Activated T-helper 1 cell treated with anti-CD3 and anti-CD28 coated beads, Interleukin-12 subunit alpha, Interleukin-12 subunit beta, Interleukin-2, Interleukin-4 antibody, amounts not matched to agents 30 ng/mL and 10 ng/mL and 1 ng/mL, durations not matched to agents 14 hours and 24 hours and 36 hours (primary cell): ENCODE measurements at regions of chr13 and their contacts with region 1.

Region 1: DNA sequence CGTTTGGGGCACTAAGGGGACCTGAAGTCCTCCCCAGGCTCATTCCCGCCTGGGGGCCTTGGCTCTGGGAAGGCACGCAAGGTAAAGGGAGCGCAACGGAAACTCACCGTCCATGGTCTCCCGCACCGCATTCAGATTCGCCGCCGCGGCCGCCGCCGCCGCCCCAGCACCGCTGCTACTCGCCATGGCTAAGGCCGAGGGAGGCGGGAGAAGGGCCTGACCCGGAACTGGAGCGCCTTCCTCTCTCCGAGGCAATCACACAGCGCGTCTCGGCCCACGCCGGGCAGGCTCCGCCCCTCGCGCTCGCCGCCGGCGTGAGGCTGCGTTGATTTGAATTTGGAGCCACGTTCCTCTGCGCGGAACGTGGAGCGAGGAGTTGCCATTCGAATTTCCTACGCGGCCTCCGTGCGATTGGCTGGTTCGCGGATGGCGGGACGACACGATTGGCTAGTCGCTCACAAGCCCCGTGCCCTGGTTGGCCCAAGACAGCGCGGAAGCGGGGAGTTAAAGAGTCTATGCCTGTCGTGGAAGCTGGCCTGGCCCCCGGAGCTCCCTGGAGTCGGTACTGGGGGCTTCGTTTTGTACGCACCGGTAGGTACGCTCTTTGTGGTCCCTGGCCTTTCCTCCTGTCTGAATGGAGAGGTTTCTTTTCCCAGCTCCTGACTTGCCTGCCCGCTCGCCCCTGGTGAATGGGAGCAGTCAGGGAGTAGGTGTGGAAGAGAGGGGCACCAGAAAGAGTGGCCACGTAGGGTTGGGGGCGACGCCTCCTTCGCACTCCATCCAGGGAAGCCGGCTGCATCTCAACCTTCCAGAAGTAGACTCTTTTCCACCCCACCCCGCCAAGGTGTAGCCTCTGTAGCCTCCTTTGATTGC is at the starts of genes BORA and MZT1:
- DNase-seq: peak; percentile 97
- H3K4me3 Mint-ChIP-seq: peak within 1 kb of the TSS; percentile 99
- H3K27ac Mint-ChIP-seq: peak within 1 kb of the TSS; percentile 97
- H3K4me1 Mint-ChIP-seq: peaks cover 70% of the 10 kb centered on the region
- H3K27me3 Mint-ChIP-seq: no peaks in the 10 kb centered on the region
- total RNA-seq, gene BORA: 14.6 and 19.4 TPM in 2 replicates
- total RNA-seq, gene MZT1: 21.2 and 22.8 TPM in 2 replicates

Region 2: GRCh38 chr13:72617951-72618350 is 109.7 kb before region 1 on chr13:
- intact Hi-C with region 1: no loop called
- DNase-seq: no peak
- H3K4me3 Mint-ChIP-seq: no peak overlapping the region
- H3K27ac Mint-ChIP-seq: no peak overlapping the region
- H3K4me1 Mint-ChIP-seq: no peaks in the 10 kb centered on the region
- H3K27me3 Mint-ChIP-seq: no peaks in the 10 kb centered on the region

Region 3: DNA sequence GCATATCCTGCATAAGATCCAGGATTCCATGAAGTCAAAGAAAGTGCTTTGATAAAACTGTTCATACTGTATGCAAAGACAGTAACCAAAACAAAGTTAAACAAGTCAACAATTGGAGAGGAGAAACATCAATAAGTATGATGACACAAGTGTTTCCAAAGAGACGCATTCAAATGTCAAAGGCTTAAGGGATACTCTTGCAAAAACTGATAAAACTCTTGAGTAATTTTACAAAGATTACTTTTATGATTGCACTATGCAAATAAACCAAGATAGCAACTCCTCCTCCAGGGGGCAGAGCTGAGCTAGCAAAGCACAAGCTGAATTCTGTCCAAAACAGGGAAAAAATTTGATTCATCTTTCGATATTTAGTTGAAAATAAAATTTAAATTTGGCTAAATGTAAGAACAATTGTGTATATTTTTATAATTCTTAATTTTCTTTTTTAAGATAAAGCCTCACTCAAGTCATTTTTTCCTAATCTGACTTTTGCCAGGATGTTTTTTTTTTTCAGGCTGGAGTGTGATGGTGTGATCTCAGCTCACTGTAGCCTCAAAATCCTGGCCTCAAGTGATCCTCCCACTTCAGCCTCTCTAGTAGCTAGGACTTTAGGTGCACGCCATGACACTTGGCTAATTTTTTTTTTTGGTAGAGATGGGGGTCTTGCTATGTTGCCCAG is 84.2 kb before region 1 on chr13:
- intact Hi-C with region 1: loop called (anchors 1 kb)
- DNase-seq: peak; percentile 8
- H3K4me3 Mint-ChIP-seq: no peak overlapping the region
- H3K27ac Mint-ChIP-seq: no peak overlapping the region
- H3K4me1 Mint-ChIP-seq: no peaks in the 10 kb centered on the region
- H3K27me3 Mint-ChIP-seq: no peaks in the 10 kb centered on the region

Region 4: GRCh38 chr13:72781451-72782439 is 54.1 kb after region 1 on chr13 and contains the starts of genes DIS3 and PIBF1:
- intact Hi-C with region 1: loop called (anchors 1 kb)
- DNase-seq: peak; percentile 97
- H3K4me3 Mint-ChIP-seq: peak within 1 kb of the TSS; percentile 100
- H3K27ac Mint-ChIP-seq: peak within 1 kb of the TSS; percentile 100
- H3K4me1 Mint-ChIP-seq: peaks cover 65% of the 10 kb centered on the region
- H3K27me3 Mint-ChIP-seq: no peaks in the 10 kb centered on the region
- total RNA-seq, gene DIS3: 49.9 and 55.4 TPM in 2 replicates
- total RNA-seq, gene PIBF1: 20.9 and 21.2 TPM in 2 replicates

Region 5: GRCh38 chr13:73058736-73059459 is 331.2 kb after region 1 on chr13 and contains the start of gene KLF5:
- intact Hi-C with region 1: loop called (anchors 1 kb)
- DNase-seq: peak; percentile 97
- H3K4me3 Mint-ChIP-seq: peak within 1 kb of the TSS; percentile 82
- H3K27ac Mint-ChIP-seq: peak within 1 kb of the TSS; percentile 74
- H3K4me1 Mint-ChIP-seq: peaks cover 20% of the 10 kb centered on the region
- H3K27me3 Mint-ChIP-seq: peaks cover 51% of the 10 kb centered on the region
- total RNA-seq, gene KLF5: 2.4 and 2.5 TPM in 2 replicates

Region 6: DNA sequence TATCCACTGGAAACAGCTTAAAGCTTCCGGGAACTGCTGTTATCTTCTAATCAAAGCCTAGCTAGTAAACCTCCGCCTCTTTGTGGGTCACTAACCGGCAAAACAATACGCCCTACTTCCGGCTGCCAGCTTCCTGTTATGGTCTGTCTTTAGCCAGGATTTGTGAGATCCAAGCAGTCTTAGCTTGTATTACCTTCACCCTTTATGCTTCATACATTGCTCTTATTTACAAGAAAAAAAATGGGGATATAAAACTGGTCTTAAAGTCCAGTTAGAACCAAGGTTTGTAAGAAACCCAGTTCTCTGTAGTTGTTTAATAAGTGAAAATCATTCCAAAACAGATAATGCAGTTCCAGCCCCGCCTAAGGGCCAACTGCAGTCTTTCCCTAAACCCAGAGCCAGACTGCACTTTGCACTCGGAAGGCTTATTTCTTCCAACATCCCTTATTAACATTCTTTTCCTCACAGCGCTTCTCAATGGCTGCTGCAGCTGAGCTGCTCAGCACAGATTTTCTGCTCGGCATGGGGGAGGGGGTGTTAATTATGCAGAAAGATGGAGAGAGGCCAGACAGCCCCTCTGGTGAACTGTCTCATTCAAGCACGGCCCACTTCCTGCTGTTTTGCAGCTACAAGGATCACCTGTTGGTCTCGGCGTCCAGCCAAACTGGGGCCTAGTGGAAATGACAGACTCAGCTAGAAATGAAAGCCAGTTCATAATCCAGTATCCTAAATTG is 1038.2 kb after region 1 on chr13:
- intact Hi-C with region 1: loop called (anchors 5 kb)
- DNase-seq: peak; percentile 43
- H3K4me3 Mint-ChIP-seq: peak overlapping the region; percentile 69
- H3K27ac Mint-ChIP-seq: peak overlapping the region; percentile 83
- H3K4me1 Mint-ChIP-seq: peaks cover 46% of the 10 kb centered on the region
- H3K27me3 Mint-ChIP-seq: no peaks in the 10 kb centered on the region